Activated T-helper 1 cell treated with anti-CD3 and anti-CD28 coated beads, Interleukin-12 subunit alpha, Interleukin-12 subunit beta, Interleukin-2, Interleukin-4 antibody, amounts not matched to agents 30 ng/mL and 10 ng/mL and 1 ng/mL, durations not matched to agents 14 hours and 24 hours and 36 hours (primary cell): ENCODE measurements at regions of chr19 and their contacts with region 1.

Region 1: DNA sequence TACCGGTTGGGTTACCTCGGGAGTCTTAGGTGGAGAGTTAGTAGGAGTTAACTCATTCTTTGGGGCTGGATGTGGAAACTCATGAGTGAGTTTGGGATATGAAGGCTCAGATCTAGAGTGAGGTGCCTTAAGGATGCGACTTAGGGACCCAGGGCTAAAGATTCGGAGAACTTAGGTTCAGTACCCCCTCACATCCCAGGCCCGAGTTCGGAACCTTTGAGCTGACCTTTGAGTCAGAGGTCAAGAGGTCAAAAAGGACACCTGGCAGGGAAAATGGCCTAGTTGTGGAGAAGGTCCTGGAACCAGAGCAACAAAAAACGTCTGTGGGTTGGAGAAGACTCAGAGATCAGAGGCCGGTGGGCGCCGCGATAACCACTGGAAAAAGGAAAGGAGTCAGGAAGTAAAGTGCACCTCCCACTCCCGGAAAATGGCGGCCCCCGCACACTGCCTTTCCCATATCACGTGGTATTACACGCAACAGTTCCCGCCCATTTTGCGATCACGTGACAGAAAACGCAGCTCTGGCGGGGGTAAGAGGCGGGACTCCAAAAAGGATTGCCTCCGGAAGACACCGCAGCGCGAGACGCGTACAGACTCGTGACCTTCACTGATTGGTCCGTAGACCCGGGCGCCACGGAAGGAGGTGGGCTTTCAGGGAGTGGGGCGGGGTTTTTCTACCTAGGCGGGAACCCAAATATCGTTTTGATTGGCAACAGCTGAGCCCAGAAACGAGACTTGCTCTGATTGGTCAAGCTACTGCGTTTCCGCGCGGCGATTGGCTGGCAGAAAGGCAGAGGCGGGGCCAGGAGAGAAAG is at the start of gene ACTMAP:
- DNase-seq: peak; percentile 100
- H3K4me3 Mint-ChIP-seq: peak within 1 kb of the TSS; percentile 99
- H3K27ac Mint-ChIP-seq: peak within 1 kb of the TSS; percentile 99
- H3K4me1 Mint-ChIP-seq: peaks cover 27% of the 10 kb centered on the region
- H3K27me3 Mint-ChIP-seq: no peaks in the 10 kb centered on the region
- total RNA-seq, gene ACTMAP: 9.5 and 10.0 TPM in 2 replicates

Region 2: DNA sequence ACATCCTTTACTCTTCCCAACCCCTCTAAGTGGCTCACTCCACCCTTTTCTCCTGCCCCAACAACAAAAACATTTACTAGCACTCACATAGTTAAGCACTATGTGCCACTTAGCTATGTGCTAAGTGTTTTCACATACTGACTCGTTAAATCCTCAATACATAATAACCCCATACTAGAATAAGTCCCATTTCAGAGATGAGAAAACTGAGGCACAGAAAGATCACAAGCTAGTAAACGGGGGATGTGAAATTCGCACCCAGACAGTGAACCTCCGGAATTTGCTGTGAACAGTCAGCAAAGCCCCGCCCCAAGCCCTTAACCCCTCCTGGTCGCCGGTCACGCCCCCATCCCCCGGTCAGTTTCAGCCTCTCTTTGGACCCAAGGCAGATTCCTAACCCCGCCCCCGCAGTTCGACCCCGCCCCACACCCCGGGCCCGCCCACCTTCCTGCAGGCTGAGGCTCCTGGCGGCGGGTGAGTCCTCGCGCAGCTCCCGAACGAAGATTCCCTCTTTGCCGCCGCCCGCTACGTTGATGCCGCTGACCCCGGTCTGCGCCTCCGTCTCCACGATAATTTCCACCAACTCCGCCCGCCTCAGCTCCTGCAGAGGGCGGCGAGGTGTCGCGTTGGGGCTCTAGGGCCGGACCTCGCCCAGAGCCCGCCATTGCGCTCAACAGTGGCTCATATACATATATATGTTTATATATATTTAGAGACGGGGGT is 346.8 kb before region 1 on chr19:
- intact Hi-C with region 1: loop called (anchors 2 kb)
- DNase-seq: peak; percentile 80
- H3K4me3 Mint-ChIP-seq: peak overlapping the region; percentile 83
- H3K27ac Mint-ChIP-seq: peak overlapping the region; percentile 72
- H3K4me1 Mint-ChIP-seq: peaks cover 21% of the 10 kb centered on the region
- H3K27me3 Mint-ChIP-seq: peaks cover 7% of the 10 kb centered on the region

Region 3: GRCh38 chr19:40465557-40466150 is 284.6 kb before region 1 on chr19 and contains the start of gene BLVRB:
- intact Hi-C with region 1: loop called (anchors 1 kb)
- DNase-seq: peak; percentile 99
- H3K4me3 Mint-ChIP-seq: peak within 1 kb of the TSS; percentile 77
- H3K27ac Mint-ChIP-seq: peak within 1 kb of the TSS; percentile 92
- H3K4me1 Mint-ChIP-seq: peaks cover 28% of the 10 kb centered on the region
- H3K27me3 Mint-ChIP-seq: peaks cover 27% of the 10 kb centered on the region
- total RNA-seq, gene BLVRB: 6.1 and 8.2 TPM in 2 replicates

Region 4: GRCh38 chr19:40662921-40663694 is 87.2 kb before region 1 on chr19:
- intact Hi-C with region 1: loop called (anchors 1 kb)
- DNase-seq: peak; percentile 87
- H3K4me3 Mint-ChIP-seq: peak overlapping the region; percentile 80
- H3K27ac Mint-ChIP-seq: peak overlapping the region; percentile 86
- H3K4me1 Mint-ChIP-seq: peaks cover 20% of the 10 kb centered on the region
- H3K27me3 Mint-ChIP-seq: peaks cover 2% of the 10 kb centered on the region

Region 5: GRCh38 chr19:40716655-40717324 is 33.5 kb before region 1 on chr19 and contains the starts of genes COQ8B and ITPKC:
- intact Hi-C with region 1: loop called (anchors 1 kb)
- DNase-seq: peak; percentile 100
- H3K4me3 Mint-ChIP-seq: peak within 1 kb of the TSS; percentile 97
- H3K27ac Mint-ChIP-seq: peak within 1 kb of the TSS; percentile 95
- H3K4me1 Mint-ChIP-seq: peaks cover 44% of the 10 kb centered on the region
- H3K27me3 Mint-ChIP-seq: no peaks in the 10 kb centered on the region
- total RNA-seq, gene COQ8B: 38.4 and 41.6 TPM in 2 replicates
- total RNA-seq, gene ITPKC: 8.7 and 9.9 TPM in 2 replicates

Region 6: GRCh38 chr19:40806488-40807468 is 56.5 kb after region 1 on chr19:
- intact Hi-C with region 1: loop called (anchors 1 kb)
- DNase-seq: peak; percentile 74
- H3K4me3 Mint-ChIP-seq: peak overlapping the region; percentile 97
- H3K27ac Mint-ChIP-seq: peak overlapping the region; percentile 98
- H3K4me1 Mint-ChIP-seq: peaks cover 82% of the 10 kb centered on the region
- H3K27me3 Mint-ChIP-seq: no peaks in the 10 kb centered on the region